OCI-LY7 (cell line): ENCODE measurements at regions of chr4 and their contacts with region 1.

Region 1: DNA sequence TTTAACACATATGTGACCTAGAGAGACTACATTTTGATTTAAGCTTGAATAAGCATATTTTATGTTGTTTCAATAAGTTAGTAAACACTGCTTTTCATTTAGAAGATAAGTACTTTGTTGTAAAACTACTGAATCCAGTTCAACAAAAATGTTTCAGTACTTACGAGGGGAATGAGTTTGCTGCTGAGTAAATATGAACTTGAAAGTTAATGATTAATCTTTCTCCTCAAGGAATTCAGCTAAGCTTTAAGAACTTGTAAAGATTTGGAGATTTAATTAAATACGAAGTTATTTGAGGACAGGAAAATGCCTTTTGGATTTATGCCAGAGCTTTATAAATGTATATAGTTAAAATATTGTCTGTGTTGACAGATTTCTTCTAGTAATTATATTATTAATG is 933.0 kb upstream of the LCORL start:
- DNase-seq: no peak
- H3K4me3 ChIP-seq: no peak overlapping the region
- H3K27ac ChIP-seq: no peak overlapping the region
- H3K4me1 ChIP-seq: no peaks in the 10 kb centered on the region
- CTCF ChIP-seq: no peak

Region 2: GRCh38 chr4:18934197-18934596 is 20.3 kb before region 1 on chr4:
- CTCF ChIA-PET with region 1: interaction called, 3 read pairs
- POLR2A ChIA-PET with region 1: interaction called, 11 read pairs
- intact Hi-C with region 1: no loop called
- DNase-seq: peak; percentile 27
- H3K4me3 ChIP-seq: no peak overlapping the region
- H3K27ac ChIP-seq: no peak overlapping the region
- H3K4me1 ChIP-seq: peaks cover 24% of the 10 kb centered on the region
- CTCF ChIP-seq: peak; percentile 65

Region 3: DNA sequence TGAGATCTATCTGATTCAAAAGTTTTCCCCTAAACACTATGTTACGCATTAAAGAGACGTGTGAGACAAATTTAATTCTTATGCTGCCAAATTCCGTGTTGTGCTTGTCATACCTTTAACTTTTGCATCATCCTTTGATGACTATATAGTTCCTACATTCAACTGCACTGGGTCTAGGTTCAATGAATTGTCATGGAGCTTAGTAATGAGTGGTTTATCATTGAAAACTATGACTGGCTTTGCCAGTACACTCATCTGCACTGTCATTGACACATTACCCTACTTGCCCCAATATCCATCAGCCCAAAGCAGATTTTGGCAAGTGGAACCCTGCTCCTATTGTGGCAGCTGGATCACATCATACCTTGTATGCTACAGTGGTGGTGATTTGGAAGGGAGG is 414.3 kb after region 1 on chr4:
- CTCF ChIA-PET with region 1: no interaction called
- POLR2A ChIA-PET with region 1: interaction called, 10 read pairs
- intact Hi-C with region 1: no loop called
- DNase-seq: no peak
- H3K4me3 ChIP-seq: no peak overlapping the region
- H3K27ac ChIP-seq: no peak overlapping the region
- H3K4me1 ChIP-seq: no peaks in the 10 kb centered on the region
- CTCF ChIP-seq: no peak